Panc1 (cell line): ENCODE measurements at regions of chr10 and their contacts with region 1.

Region 1: GRCh38 chr10:88582806-88583583 is at the start of gene RNLS:
- DNase-seq: peak; percentile 30
- ATAC-seq: peak; percentile 96
- H3K4me3 ChIP-seq: peak within 1 kb of the TSS; percentile 74 to 78
- H3K27ac ChIP-seq: peak within 1 kb of the TSS; percentile 93
- H3K4me1 ChIP-seq: peaks cover 5% of the 10 kb centered on the region
- H3K27me3 ChIP-seq: 0 out of 2 replicates have a peak, but pooled peaks cover 2% of the 10 kb centered on the region
- CTCF ChIP-seq: peak; percentile 97
- total RNA-seq, gene RNLS: 11.4 TPM

Region 2: DNA sequence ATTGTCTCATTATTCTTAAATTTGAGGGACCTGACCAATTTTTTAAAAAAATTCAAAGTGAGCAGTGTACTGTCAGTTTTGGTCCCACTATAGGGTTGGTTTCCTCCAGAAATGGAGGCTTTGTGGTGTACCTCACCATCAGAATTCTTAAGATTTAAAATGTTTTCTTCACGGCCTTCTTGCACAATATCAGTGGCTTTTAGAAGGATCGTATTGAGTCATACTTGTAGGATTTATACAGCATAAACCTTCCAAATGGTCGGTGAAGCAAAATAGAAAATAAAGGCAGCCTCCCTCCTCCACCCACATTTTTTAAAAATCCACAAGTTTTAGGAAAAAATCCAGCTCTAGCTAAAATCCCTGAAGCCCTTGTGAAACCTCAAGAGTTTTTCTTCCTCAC is 126.3 kb before region 1 on chr10:
- CTCF ChIA-PET with region 1: no interaction called
- POLR2A ChIA-PET with region 1: interaction called, 18 read pairs
- in situ Hi-C with region 1: no loop called
- intact Hi-C with region 1: no loop called
- DNase-seq: no peak
- ATAC-seq: no peak
- H3K4me3 ChIP-seq: no peak overlapping the region
- H3K27ac ChIP-seq: no peak overlapping the region
- H3K4me1 ChIP-seq: no peaks in the 10 kb centered on the region
- H3K27me3 ChIP-seq: no peaks in the 10 kb centered on the region
- CTCF ChIP-seq: no peak

Region 3: DNA sequence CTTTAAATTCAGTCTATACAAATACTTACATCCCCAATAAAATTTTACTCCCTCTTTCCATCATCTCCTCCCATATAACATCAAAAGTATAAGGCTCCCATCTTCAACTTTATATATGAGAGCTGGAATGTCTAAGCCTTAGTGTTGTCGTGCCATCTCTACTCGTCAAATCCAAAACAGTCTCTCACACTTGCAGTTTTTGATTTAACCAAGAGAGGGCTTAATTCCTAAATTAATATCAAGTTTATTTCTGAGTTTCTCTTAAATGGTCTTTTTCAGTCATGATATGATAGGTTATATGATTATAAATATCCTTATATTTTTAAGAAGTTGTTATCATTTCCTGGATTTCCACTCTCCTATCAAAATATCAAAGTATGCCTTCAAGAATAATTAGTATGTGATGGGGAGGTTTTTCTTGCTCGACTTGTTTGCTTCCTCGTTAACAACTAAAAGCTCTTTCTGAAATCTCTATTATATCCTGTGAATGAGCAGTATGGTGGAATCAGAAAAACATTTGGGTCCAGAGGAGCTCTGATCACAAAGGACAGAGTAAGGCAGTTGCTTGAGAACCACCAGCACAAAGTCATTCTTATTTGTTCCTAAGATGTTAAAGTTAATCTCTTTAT is 110.5 kb after region 1 on chr10:
- CTCF ChIA-PET with region 1: no interaction called
- POLR2A ChIA-PET with region 1: interaction called, 13 read pairs
- in situ Hi-C with region 1: no loop called
- intact Hi-C with region 1: no loop called
- DNase-seq: no peak
- ATAC-seq: no peak
- H3K4me3 ChIP-seq: no peak overlapping the region
- H3K27ac ChIP-seq: no peak overlapping the region
- H3K4me1 ChIP-seq: no peaks in the 10 kb centered on the region
- H3K27me3 ChIP-seq: no peaks in the 10 kb centered on the region
- CTCF ChIP-seq: peak; percentile 42; the same call in 1 of the 2 replicates